ENCODE measurements at regions of chr1 and their contacts with region 1.

Region 1: GRCh38 chr1:95233737-95234500 is at the start of gene RWDD3:
- H3K4me3 ChIP-seq: peak within 1 kb of the TSS; percentile 98
- H3K27ac ChIP-seq: peak within 1 kb of the TSS; percentile 70; the same call in 1 of the 2 replicates
- H3K4me1 ChIP-seq: no peaks in the 10 kb centered on the region
- CTCF ChIP-seq: peak; percentile 76

Region 2: GRCh38 chr1:94962409-94963265 is 271.3 kb before region 1 on chr1:
- CTCF ChIA-PET with region 1: no interaction called
- POLR2A ChIA-PET with region 1: no interaction called
- H3K4me3 ChIP-seq: no peak overlapping the region
- H3K27ac ChIP-seq: no peak overlapping the region
- H3K4me1 ChIP-seq: no peaks in the 10 kb centered on the region; the same call in 1 of the 2 replicates
- CTCF ChIP-seq: no peak

Region 3: DNA sequence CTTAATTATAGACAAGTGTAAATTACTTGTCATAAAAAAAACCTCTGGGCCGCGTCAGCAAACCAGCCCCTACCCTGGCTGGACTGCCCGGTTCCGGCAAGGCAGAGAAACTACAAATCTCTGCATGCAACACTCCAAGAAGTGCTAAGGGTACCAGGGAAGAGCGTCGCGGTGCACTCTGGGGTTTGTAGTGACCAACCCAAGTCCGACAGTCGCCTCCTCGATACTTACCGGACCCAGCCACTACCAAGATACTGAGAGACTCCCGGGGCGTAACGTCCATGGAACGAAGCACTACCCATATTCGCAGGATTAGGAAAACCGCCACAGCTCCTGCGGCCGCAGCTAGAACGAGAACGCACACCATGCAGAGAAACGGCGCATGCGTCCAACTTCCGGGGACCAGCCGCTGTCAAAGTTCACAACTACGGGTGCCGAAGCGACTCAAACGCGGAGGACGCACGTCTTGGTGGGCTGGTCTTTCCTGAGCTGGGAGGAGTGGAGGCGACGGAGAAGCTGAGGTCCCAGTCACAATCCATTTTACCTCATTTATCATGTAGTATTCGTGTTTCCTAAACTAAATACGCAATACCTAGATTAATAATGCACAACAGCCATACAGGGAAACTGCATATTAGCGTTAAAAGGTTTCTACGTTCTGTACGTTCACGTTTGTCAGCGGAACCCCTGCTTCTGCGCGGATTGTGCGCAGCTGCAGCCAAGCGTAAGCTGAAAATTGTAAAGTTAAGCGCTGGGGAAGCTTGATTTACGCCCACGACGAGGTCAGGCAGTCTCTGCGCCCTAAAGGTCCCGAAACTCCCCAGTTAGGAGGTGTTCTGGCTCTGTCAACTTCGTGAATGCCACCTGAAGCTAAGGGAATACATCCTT is 161.1 kb before region 1 on chr1 and contains the start of gene ALG14:
- CTCF ChIA-PET with region 1: interaction called, 6 read pairs
- POLR2A ChIA-PET with region 1: interaction called, 31 read pairs
- H3K4me3 ChIP-seq: peak within 1 kb of the TSS; percentile 91
- H3K27ac ChIP-seq: peak within 1 kb of the TSS; percentile 61
- H3K4me1 ChIP-seq: peaks cover 3% of the 10 kb centered on the region; the same call in 1 of the 2 replicates
- CTCF ChIP-seq: no peak

Region 4: GRCh38 chr1:95116580-95117206 is 117.2 kb before region 1 on chr1:
- CTCF ChIA-PET with region 1: interaction called, 15 read pairs
- POLR2A ChIA-PET with region 1: interaction called, 21 read pairs
- H3K4me3 ChIP-seq: peak overlapping the region; percentile 73
- H3K27ac ChIP-seq: peak overlapping the region; percentile 84; the same call in 1 of the 2 replicates
- H3K4me1 ChIP-seq: no peaks in the 10 kb centered on the region
- CTCF ChIP-seq: peak; percentile 88

Region 5: GRCh38 chr1:95223110-95223509 is 10.8 kb before region 1 on chr1:
- CTCF ChIA-PET with region 1: interaction called, 12 read pairs
- POLR2A ChIA-PET with region 1: interaction called, 3 read pairs
- H3K4me3 ChIP-seq: no peak overlapping the region
- H3K27ac ChIP-seq: no peak overlapping the region
- H3K4me1 ChIP-seq: no peaks in the 10 kb centered on the region
- CTCF ChIP-seq: no peak

Region 6: DNA sequence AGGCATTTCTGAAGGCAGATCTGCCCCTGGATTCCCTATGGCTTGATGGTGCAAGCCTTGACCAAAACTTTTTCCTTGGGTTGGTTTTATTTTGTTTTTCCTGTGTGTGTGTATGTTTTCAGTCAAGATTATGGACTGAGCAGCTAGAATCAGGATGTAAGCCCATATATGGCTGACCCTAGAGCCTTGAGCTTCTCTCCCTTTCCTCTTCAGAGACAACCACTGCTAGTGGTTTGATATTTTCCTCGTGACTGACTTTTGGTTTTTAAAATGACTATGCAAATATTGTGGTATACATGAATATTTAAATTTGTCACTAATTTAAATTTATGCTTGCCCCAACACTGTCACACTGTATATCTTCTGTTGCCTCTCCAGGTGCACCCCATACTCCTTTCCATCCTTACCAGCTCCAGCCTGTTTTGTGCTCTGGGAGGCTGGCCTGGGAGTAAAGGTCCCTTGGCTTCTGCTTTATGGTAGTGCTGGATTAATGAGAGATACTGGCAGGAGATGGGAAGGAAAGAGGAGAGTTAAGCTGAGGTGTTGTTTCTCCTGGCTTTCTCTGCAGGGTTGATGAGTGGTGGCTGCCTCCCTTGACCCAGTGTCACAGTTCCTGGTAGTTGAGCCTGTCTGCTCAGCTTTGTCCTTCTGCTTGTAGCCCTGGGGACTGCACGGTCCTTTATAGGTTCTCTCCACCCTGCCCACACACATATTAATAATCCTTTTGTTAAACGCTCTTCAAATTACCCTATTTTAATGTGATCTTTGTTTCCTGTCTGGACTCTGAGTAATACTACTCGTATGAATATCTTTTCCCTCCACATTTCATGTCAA is 44.5 kb after region 1 on chr1:
- CTCF ChIA-PET with region 1: no interaction called
- POLR2A ChIA-PET with region 1: no interaction called
- H3K4me3 ChIP-seq: no peak overlapping the region
- H3K27ac ChIP-seq: no peak overlapping the region
- H3K4me1 ChIP-seq: no peaks in the 10 kb centered on the region
- CTCF ChIP-seq: no peak

Region 7: DNA sequence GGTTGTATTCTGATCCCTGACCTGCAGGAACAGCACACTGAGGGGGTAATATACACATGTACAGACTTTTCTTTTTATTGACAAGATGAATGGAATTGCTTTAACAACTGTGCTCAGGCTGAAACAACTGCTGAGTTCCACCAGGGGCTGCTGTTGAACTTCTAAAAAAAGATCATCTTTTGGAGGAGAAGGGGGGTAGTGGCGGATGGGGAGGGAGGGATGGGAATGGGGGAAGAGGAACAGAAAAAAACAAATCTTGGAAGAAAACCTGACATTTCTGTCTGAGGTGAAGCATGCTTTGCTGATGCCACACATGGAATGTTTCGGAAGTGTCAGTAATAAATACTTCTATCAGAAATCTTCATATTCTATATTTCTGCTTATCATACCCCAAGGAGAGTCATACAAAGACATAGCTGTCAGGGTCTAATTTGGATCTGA is 75.1 kb after region 1 on chr1:
- CTCF ChIA-PET with region 1: no interaction called
- POLR2A ChIA-PET with region 1: no interaction called
- H3K4me3 ChIP-seq: no peak overlapping the region
- H3K27ac ChIP-seq: no peak overlapping the region
- H3K4me1 ChIP-seq: no peaks in the 10 kb centered on the region
- CTCF ChIP-seq: no peak

Region 8: GRCh38 chr1:95578462-95578861 is 344.5 kb after region 1 on chr1:
- CTCF ChIA-PET with region 1: no interaction called
- POLR2A ChIA-PET with region 1: no interaction called
- H3K4me3 ChIP-seq: no peak overlapping the region
- H3K27ac ChIP-seq: no peak overlapping the region
- H3K4me1 ChIP-seq: no peaks in the 10 kb centered on the region
- CTCF ChIP-seq: no peak

Measured in HEK293 (cell line).